A549 (cell line): ENCODE measurements at regions of chr6 and their contacts with region 1.

Region 1: DNA sequence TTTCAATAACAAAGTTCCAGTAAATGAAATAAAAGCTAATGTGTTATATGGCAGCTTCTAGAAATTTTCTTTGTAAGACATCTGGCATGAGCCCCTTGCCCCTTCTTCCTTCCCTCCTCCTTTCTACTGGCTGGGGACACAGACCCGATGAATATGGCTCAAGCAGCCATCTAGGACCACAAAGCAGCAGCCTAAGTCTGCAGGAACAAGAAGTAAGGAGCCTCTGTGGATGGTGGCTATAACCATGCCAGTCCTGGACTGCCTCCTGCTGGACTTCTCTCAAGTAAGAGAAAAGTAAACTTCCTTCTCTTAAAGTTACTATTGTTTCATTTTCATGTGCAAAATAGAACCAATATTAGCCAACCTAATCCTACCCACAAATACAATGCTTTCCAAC is 114.9 kb upstream of the DST start:
- DNase-seq: peak in 1 of 2 experiments; percentile 72
- ATAC-seq: peak; percentile 77 to 85; a peak in 4 of 6 replicates
- H3K4me3 ChIP-seq: no peak overlapping the region
- H3K27ac ChIP-seq: peak overlapping the region in 1 of 2 experiments; percentile 53; a peak in 3 of 6 replicates
- H3K4me1 ChIP-seq: peaks cover 45% of the 10 kb centered on the region
- CTCF ChIP-seq: peak; percentile 48
- EP300 ChIP-seq: no peak
- POLR2A ChIP-seq: no peak
- RAD21 ChIP-seq: peak; percentile 74 to 80

Region 2: DNA sequence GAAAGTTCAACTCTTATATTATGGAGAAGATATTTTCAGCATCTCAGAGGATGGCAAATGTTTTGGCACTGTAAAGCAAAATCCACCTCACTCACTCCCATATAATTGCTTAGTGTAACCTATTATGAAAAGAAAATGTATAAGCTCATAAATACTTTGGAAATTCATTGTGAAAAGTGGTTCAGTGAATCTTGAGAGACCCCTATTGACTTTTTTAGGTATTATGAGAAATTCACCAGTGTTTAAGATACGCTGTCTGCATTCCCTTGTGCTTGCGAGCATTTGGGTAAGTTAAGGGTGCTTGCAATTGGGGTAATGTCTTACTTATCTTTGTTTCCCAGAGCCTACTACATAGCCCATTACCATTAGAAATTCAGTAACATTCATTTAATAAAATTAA is 815.9 kb before region 1 on chr6:
- CTCF ChIA-PET with region 1: no interaction called
- POLR2A ChIA-PET with region 1: no interaction called
- DNase-seq: peak in 1 of 2 experiments; percentile 14
- ATAC-seq: no peak
- H3K4me3 ChIP-seq: no peak overlapping the region
- H3K27ac ChIP-seq: no peak overlapping the region
- H3K4me1 ChIP-seq: peaks cover 9% of the 10 kb centered on the region; the same call in 2 of the 3 replicates
- CTCF ChIP-seq: peak; percentile 38
- EP300 ChIP-seq: no peak
- POLR2A ChIP-seq: no peak
- RAD21 ChIP-seq: peak; percentile 53 to 57

Region 3: DNA sequence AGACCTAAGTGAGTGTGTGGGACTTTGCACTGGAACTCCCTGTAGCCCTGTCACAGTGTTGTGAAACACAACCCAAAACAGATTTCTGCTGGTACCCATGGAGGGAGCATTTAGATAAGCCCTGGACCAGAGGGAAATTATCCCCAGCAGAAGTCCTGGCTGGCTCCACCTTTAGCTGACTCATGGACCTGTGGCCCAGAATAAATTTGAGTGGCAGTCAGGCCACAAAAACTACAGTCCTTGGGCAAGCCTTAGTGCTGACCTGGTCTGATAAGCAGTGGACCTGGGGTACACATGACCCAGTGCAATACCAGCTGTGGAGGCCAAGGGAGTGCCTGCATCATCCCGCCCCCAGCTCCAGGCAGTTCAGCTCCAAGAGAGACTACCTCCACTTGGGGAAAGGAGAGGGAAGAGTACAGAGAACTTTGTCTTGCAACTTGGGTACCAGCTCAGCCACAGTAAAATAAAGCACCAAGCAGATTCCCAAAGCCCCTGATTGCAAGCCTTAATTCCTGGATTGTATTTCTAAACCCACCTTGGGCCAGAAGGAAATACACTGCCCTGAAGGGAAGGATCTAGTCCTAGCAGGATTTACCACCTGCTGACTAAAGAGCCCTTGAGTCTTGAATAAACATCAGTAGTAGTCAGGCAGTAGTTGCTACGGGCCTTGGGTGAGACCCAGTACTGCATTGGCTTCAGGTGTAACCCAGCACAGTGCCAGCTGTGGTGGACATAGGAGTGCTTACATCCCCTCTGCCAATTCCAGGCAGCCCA is 369.8 kb before region 1 on chr6:
- CTCF ChIA-PET with region 1: no interaction called
- POLR2A ChIA-PET with region 1: no interaction called
- DNase-seq: no peak
- ATAC-seq: no peak; a peak in 1 of 6 replicates
- H3K4me3 ChIP-seq: no peak overlapping the region
- H3K27ac ChIP-seq: no peak overlapping the region
- H3K4me1 ChIP-seq: peaks cover 5% of the 10 kb centered on the region; the same call in 1 of the 3 replicates
- CTCF ChIP-seq: no peak
- EP300 ChIP-seq: no peak
- POLR2A ChIP-seq: no peak
- RAD21 ChIP-seq: no peak

Region 4: GRCh38 chr6:56708810-56709597 is 48.6 kb before region 1 on chr6:
- CTCF ChIA-PET with region 1: interaction called, 18 read pairs
- POLR2A ChIA-PET with region 1: no interaction called
- DNase-seq: peak in 1 of 2 experiments; percentile 64
- ATAC-seq: peak; percentile 45 to 48; a peak in 3 of 6 replicates
- H3K4me3 ChIP-seq: no peak overlapping the region
- H3K27ac ChIP-seq: peak overlapping the region; percentile 49 to 74
- H3K4me1 ChIP-seq: peaks cover 51% of the 10 kb centered on the region
- CTCF ChIP-seq: peak; percentile 58
- EP300 ChIP-seq: no peak
- POLR2A ChIP-seq: no peak
- RAD21 ChIP-seq: peak; percentile 56 to 70

Region 5: GRCh38 chr6:56843573-56844349 is 86.2 kb after region 1 on chr6:
- CTCF ChIA-PET with region 1: interaction called, 19 read pairs
- POLR2A ChIA-PET with region 1: no interaction called
- DNase-seq: peak; percentile 65 to 90
- ATAC-seq: peak; percentile 92 to 96
- H3K4me3 ChIP-seq: peak overlapping the region; percentile 90
- H3K27ac ChIP-seq: peak overlapping the region; percentile 97 to 100
- H3K4me1 ChIP-seq: peaks cover 43% of the 10 kb centered on the region
- CTCF ChIP-seq: peak; percentile 47; the same call in 2 of the 3 replicates
- EP300 ChIP-seq: no peak
- POLR2A ChIP-seq: peak; percentile 59
- RAD21 ChIP-seq: peak; percentile 52 to 61

Region 6: DNA sequence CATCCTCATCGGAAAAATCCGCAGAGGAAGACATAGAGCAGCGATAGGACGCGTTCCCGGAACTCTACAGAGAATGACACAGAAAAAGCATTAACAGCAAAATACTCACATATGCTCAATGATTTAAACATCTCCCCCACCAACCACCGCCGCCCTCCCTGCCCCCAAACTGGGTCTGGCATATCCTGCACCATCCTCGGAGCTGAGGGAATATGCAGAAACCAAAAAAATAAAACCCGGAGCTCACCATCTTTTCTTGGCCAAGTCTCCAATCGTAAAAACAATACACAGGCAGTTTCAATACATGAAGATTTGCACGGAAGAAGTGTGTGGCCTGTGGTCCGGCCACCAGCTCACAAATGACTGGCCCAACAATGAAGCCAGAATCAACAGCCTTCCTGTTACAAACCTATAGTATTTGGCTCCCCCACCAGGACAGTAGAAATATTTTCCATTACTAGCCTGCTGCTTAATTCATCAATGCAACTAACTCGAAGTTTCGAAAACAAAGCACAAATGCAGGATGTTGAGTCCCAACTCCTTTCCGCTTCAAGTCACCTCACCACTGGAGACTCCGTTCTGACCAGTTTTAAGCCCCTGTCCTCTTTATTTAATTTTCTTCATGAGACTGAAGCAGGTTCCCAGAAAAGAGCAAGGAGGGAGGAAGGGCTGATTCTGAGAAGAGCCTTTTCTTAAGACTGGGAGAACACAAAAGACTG is 94.1 kb after region 1 on chr6:
- CTCF ChIA-PET with region 1: interaction called, 19 read pairs
- POLR2A ChIA-PET with region 1: no interaction called
- DNase-seq: peak; percentile 46 to 65
- ATAC-seq: peak; percentile 92 to 94
- H3K4me3 ChIP-seq: no peak overlapping the region
- H3K27ac ChIP-seq: peak overlapping the region; percentile 24 to 74; a peak in 4 of 6 replicates
- H3K4me1 ChIP-seq: peaks cover 34% of the 10 kb centered on the region
- CTCF ChIP-seq: peak; percentile 67
- EP300 ChIP-seq: no peak
- POLR2A ChIP-seq: no peak
- RAD21 ChIP-seq: peak; percentile 74 to 81